ENCODE measurements at regions of chr19 and their contacts with region 1.

Region 1: DNA sequence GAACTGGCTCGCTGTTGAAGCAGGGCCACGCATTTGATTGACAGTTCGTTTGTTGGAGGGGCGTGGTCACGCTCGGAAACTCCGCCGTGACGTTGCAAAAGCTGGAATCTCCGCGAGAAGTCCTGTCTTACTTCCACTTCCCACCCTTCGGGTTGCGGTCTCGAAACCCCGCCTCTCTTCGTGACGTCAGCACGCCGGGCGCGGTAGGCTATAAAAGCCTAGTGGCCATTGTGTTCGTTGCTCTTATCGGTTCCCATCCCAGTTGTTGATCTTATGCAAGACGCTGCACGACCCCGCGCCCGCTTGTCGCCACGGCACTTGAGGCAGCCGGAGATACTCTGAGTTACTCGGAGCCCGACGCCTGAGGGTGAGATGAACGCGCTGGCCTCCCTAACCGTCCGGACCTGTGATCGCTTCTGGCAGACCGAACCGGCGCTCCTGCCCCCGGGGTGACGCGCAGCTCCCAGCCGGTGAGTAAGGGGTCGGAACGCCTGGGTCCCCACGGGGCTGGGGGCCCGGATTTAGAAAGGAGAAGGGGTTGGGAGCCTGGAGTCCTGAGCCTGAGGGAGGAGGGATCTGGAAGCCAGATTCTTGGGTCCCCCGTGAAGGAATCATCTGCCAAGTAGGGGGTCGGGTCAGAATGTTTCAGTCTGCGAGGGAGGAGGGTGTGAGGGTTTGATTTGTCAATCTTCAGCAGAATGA is at the start of gene PPP1R15A:
- DNase-seq: peak; percentile 95 to 100
- H3K4me3 ChIP-seq: peak within 1 kb of the TSS; percentile 80 to 97 (median 92)
- H3K27ac ChIP-seq: peak within 1 kb of the TSS; percentile 98
- H3K4me1 ChIP-seq: peaks cover 5 to 27% (median 15%) of the 10 kb centered on the region in 4 experiments
- H3K27me3 ChIP-seq: no peaks in the 10 kb centered on the region
- CTCF ChIP-seq: peak in 1 of 3 experiments; percentile 4; a peak in 1 of 4 replicates
- EP300 ChIP-seq: no peak
- POLR2A ChIP-seq: peak; percentile 99
- RAD21 ChIP-seq: no peak
- total RNA-seq, gene PPP1R15A: 12.8 and 14.0 TPM in 2 replicates

Region 2: DNA sequence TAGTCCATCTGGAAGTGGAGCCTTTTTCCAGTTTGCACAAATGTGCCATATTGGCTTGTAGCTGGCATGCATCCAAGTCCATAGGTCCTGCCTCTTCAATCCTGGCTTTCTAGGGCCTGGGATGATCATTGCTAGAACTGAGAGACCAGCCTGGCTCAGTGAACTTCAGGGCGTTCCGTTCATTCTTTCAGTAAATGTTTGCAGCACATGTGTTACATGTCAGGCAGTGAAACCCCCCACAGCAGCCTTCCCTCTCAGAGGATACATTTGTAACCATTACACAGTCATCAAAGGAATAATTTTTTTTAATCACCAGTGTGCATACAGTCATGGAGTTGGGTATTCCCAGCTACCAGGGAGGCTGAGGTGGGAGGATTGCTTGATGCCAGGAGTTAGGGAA is 166.9 kb before region 1 on chr19:
- CTCF ChIA-PET with region 1: no interaction called
- POLR2A ChIA-PET with region 1: no interaction called
- DNase-seq: no peak
- H3K4me3 ChIP-seq: no peak overlapping the region
- H3K27ac ChIP-seq: no peak overlapping the region
- H3K4me1 ChIP-seq: peaks cover 0 to 3% (median 0%) of the 10 kb centered on the region in 4 experiments; a peak in 1 of 7 replicates
- H3K27me3 ChIP-seq: no peaks in the 10 kb centered on the region
- CTCF ChIP-seq: no peak
- EP300 ChIP-seq: no peak
- POLR2A ChIP-seq: no peak
- RAD21 ChIP-seq: no peak

Region 3: GRCh38 chr19:48835734-48836088 is 36.6 kb before region 1 on chr19:
- CTCF ChIA-PET with region 1: no interaction called
- POLR2A ChIA-PET with region 1: interaction called, 15 read pairs
- DNase-seq: peak; percentile 78 to 97
- H3K4me3 ChIP-seq: peak overlapping the region; percentile 42 to 70 (median 53)
- H3K27ac ChIP-seq: no peak overlapping the region
- H3K4me1 ChIP-seq: peaks cover 0 to 2% (median 0%) of the 10 kb centered on the region in 4 experiments; a peak in 2 of 7 replicates
- H3K27me3 ChIP-seq: no peaks in the 10 kb centered on the region
- CTCF ChIP-seq: peak; percentile 84 to 98 (median 93)
- EP300 ChIP-seq: peak in 1 of 2 experiments; percentile 58; a peak in 1 of 3 replicates
- POLR2A ChIP-seq: peak in 1 of 2 experiments; percentile 67; a peak in 2 of 3 replicates
- RAD21 ChIP-seq: peak; percentile 85 to 91

Region 4: GRCh38 chr19:48853483-48853882 is 18.9 kb before region 1 on chr19:
- CTCF ChIA-PET with region 1: interaction called, 4 read pairs
- POLR2A ChIA-PET with region 1: interaction called, 40 read pairs
- DNase-seq: no peak
- H3K4me3 ChIP-seq: no peak overlapping the region
- H3K27ac ChIP-seq: no peak overlapping the region
- H3K4me1 ChIP-seq: no peaks in the 10 kb centered on the region
- H3K27me3 ChIP-seq: no peaks in the 10 kb centered on the region
- CTCF ChIP-seq: no peak
- EP300 ChIP-seq: no peak
- POLR2A ChIP-seq: no peak
- RAD21 ChIP-seq: no peak

Region 5: GRCh38 chr19:48899781-48900476 is 27.6 kb after region 1 on chr19 and contains the start of gene NUCB1:
- CTCF ChIA-PET with region 1: interaction called, 4 read pairs
- POLR2A ChIA-PET with region 1: interaction called, 75 read pairs
- DNase-seq: peak; percentile 95 to 99
- H3K4me3 ChIP-seq: peak within 1 kb of the TSS; percentile 58 to 90 (median 84)
- H3K27ac ChIP-seq: peak within 1 kb of the TSS; percentile 41; the same call in 1 of the 2 replicates
- H3K4me1 ChIP-seq: peaks cover 0 to 4% (median 0%) of the 10 kb centered on the region in 4 experiments; a peak in 4 of 7 replicates
- H3K27me3 ChIP-seq: no peaks in the 10 kb centered on the region
- CTCF ChIP-seq: peak in 2 of 3 experiments; percentile 8 to 44; a peak in 2 of 4 replicates
- EP300 ChIP-seq: no peak
- POLR2A ChIP-seq: 0 out of 3 replicates have a peak, but pooled peaks of 1 of the 2 experiments have one; percentile 41
- RAD21 ChIP-seq: no peak
- total RNA-seq, gene NUCB1: 106 and 111 TPM in 2 replicates

Region 6: DNA sequence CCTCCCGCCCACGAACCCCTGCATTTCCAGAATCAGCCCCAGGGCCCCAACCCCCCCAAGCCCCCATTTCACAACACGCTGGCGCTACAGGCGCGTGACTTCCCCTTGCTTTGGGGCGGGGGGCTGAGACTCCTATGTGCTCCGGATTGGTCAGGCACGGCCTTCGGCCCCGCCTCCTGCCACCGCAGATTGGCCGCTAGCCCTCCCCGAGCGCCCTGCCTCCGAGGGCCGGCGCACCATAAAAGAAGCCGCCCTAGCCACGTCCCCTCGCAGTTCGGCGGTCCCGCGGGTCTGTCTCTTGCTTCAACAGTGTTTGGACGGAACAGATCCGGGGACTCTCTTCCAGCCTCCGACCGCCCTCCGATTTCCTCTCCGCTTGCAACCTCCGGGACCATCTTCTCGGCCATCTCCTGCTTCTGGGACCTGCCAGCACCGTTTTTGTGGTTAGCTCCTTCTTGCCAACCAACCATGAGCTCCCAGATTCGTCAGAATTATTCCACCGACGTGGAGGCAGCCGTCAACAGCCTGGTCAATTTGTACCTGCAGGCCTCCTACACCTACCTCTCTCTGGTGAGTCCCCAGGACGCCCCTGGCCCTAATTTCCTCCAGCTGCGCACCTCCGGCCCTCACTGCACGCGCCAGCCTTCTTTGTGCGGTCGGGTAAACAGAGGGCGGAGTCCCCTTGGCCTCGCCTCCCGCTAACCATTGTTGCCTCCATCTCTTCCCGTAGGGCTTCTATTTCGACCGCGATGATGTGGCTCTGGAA is 92.9 kb after region 1 on chr19 and contains the start of gene FTL:
- CTCF ChIA-PET with region 1: interaction called, 8 read pairs
- POLR2A ChIA-PET with region 1: interaction called, 49 read pairs
- DNase-seq: peak; percentile 93 to 96
- H3K4me3 ChIP-seq: peak within 1 kb of the TSS; percentile 86 to 96 (median 92)
- H3K27ac ChIP-seq: peak within 1 kb of the TSS; percentile 76
- H3K4me1 ChIP-seq: peaks cover 4 to 18% (median 12%) of the 10 kb centered on the region in 4 experiments
- H3K27me3 ChIP-seq: no peaks in the 10 kb centered on the region
- CTCF ChIP-seq: no peak
- EP300 ChIP-seq: no peak
- POLR2A ChIP-seq: peak; percentile 98 to 99
- RAD21 ChIP-seq: no peak
- total RNA-seq, gene FTL: 1,751 and 1,764 TPM in 2 replicates

Region 7: GRCh38 chr19:48993175-48994034 is 121.1 kb after region 1 on chr19 and contains the starts of genes GYS1 and RUVBL2:
- CTCF ChIA-PET with region 1: interaction called, 4 read pairs
- POLR2A ChIA-PET with region 1: interaction called, 15 read pairs
- DNase-seq: peak; percentile 97 to 99
- H3K4me3 ChIP-seq: peak within 1 kb of the TSS; percentile 74 to 97 (median 92)
- H3K27ac ChIP-seq: peak within 1 kb of the TSS; percentile 63
- H3K4me1 ChIP-seq: peaks cover 0 to 3% (median 0%) of the 10 kb centered on the region in 4 experiments; a peak in 2 of 7 replicates
- H3K27me3 ChIP-seq: no peaks in the 10 kb centered on the region
- CTCF ChIP-seq: peak; percentile 78 to 92 (median 88)
- EP300 ChIP-seq: no peak
- POLR2A ChIP-seq: peak in 1 of 2 experiments; percentile 77; a peak in 2 of 3 replicates
- RAD21 ChIP-seq: peak in 1 of 2 experiments; percentile 8; a peak in 2 of 4 replicates
- total RNA-seq, gene GYS1: 37.8 and 38.7 TPM in 2 replicates
- total RNA-seq, gene RUVBL2: 152 and 160 TPM in 2 replicates